Activated CD4-positive, alpha-beta T cell treated with anti-CD3 and anti-CD28 coated beads for 36 hours (primary cell): ENCODE measurements at regions of chr22 and their contacts with region 1.

Region 1: DNA sequence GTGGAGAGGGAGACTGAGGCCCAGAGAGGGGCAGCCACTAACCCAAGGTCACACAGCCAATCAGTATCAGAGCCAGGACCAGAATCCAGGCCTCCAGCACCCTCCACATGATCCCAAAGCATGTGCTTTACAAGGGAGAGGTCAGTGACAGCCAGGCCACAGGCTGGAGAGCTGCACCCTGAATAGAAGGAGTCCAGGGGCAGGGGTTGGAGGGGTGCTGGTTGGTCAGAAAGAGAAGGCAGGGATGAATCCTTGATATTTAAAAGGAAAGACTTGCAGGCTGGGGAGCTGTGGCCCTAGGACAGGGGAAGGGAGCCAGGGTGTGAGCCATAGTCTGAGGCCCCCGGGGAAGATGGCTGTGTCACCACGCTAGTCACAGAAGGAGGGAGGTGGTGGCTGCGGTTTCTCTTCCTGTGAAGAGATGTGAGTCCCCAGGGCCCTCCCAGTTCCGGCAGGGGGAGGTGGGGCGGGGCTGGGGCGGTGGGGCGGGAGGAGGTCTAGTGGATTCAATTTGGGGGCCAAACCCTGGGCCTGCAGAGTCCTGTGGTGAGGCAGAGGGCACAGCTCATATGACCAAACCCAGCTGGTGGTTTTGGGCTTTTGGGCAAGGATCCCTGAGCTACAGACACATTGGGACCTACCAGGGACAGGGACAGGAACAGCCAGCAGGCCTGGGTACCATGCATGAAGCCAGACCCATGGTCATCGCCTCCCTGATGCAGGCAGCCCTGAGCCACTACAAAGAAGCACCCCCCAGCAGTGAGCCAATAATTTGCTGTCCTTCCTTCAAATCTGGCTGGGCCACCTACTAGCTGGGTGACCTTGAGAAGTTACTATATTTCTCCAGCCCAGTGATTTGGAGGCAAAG is 14.0 kb downstream of the RAC2 start:
- DNase-seq: peak; percentile 97
- ATAC-seq: peak; percentile 69
- H3K4me3 Mint-ChIP-seq: peak overlapping the region; percentile 92
- H3K27ac Mint-ChIP-seq: peak overlapping the region; percentile 99
- H3K4me1 Mint-ChIP-seq: peaks cover 90% of the 10 kb centered on the region
- H3K27me3 Mint-ChIP-seq: no peaks in the 10 kb centered on the region

Region 2: DNA sequence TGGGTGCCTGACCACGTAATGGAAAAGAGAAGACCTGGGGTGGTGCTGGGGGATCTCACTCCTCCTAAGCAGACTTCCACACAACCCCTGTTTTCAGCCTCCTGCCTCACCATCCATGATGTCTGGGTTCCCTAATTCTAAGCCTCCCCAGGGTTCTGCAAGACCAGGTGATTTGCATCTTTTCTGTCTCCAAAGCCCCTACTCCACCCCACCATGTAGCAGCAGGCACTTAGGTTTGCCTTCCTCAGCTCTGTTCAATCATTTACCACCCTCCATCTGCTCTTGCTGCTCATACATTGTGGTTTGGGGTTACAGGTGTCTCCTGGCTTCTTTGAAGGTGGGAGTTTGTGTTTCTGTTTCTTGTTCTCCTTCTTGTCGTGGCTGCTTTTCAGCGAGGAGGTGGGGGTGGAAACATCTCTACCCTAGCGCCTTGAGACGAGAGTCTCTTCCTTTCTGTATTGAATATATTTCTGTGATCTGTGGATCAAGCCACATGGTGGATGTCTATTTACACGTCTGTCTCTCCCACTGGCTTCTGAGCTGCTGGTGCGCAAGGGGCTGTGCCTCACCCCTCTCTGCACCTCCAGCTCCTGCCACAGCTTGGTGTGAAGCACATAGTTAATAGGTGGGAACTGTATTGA is 11.1 kb before region 1 on chr22:
- CTCF ChIA-PET with region 1: interaction called, 7 read pairs
- POLR2A ChIA-PET with region 1: interaction called, 11 read pairs
- intact Hi-C with region 1: loop called (anchors 1 kb)
- DNase-seq: peak; percentile 83
- ATAC-seq: peak; percentile 68
- H3K4me3 Mint-ChIP-seq: peak overlapping the region; percentile 78
- H3K27ac Mint-ChIP-seq: peak overlapping the region; percentile 94
- H3K4me1 Mint-ChIP-seq: peaks cover 79% of the 10 kb centered on the region
- H3K27me3 Mint-ChIP-seq: no peaks in the 10 kb centered on the region

Region 3: GRCh38 chr22:37282385-37282677 is 52.3 kb after region 1 on chr22 and contains the start of gene CYTH4:
- CTCF ChIA-PET with region 1: interaction called, 3 read pairs
- POLR2A ChIA-PET with region 1: no interaction called
- intact Hi-C with region 1: loop called in 1 of 2 experiments (anchors 2 kb)
- DNase-seq: peak; percentile 93
- ATAC-seq: peak; percentile 87
- H3K4me3 Mint-ChIP-seq: peak within 1 kb of the TSS; percentile 82
- H3K27ac Mint-ChIP-seq: peak within 1 kb of the TSS; percentile 98
- H3K4me1 Mint-ChIP-seq: peaks cover 60% of the 10 kb centered on the region
- H3K27me3 Mint-ChIP-seq: no peaks in the 10 kb centered on the region
- total RNA-seq, gene CYTH4: 33.1 to 42.8 TPM